Activated CD4-positive, alpha-beta T cell treated with anti-CD3 and anti-CD28 coated beads for 36 hours (primary cell): ENCODE measurements at regions of chr16 and their contacts with region 1.

Region 1: DNA sequence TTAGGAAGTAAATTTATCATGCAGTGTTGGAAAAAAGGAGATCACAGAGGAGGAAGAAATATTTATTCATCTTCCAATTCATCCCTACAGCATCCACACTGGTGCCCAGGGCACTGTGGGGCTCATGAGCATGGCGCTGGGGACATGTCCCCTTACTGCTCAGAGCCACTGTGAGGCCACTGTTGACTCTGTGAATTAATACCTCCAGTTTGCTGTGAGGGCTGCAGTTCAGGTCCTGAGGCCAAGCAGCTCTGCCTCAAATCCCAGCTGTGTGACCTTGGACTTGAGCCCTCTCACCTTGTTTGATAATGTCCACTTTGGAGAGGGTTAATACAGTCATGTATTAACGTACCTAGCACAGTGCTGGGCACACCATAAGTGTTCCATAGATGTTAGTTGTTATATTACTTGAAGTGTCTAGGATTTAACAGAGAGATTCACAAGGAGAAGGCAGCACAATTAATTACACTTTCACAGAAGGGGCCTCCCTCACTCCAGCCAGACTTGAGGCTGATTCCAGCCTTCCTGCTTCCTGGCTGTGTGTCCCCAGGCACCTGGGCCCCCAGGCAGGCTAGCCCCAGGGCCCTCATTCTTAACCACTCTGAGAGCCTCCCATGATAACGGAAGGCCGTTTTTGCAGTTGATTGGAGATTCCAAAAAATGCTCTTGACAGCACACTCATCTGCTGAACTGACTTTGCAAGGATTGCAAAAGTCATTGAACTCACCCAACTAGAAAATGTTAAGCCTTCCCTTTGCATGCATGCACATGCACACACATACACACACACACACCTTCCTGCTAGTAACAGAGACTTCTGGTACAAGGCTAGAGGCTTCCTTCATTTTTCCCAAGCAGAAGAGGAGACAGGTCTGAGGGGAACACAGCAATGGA is 29.4 kb downstream of the KATNIP start:
- DNase-seq: no peak
- ATAC-seq: peak; percentile 27
- H3K4me3 Mint-ChIP-seq: no peak overlapping the region
- H3K27ac Mint-ChIP-seq: no peak overlapping the region
- H3K4me1 Mint-ChIP-seq: peaks cover 11% of the 10 kb centered on the region
- H3K27me3 Mint-ChIP-seq: no peaks in the 10 kb centered on the region

Region 2: DNA sequence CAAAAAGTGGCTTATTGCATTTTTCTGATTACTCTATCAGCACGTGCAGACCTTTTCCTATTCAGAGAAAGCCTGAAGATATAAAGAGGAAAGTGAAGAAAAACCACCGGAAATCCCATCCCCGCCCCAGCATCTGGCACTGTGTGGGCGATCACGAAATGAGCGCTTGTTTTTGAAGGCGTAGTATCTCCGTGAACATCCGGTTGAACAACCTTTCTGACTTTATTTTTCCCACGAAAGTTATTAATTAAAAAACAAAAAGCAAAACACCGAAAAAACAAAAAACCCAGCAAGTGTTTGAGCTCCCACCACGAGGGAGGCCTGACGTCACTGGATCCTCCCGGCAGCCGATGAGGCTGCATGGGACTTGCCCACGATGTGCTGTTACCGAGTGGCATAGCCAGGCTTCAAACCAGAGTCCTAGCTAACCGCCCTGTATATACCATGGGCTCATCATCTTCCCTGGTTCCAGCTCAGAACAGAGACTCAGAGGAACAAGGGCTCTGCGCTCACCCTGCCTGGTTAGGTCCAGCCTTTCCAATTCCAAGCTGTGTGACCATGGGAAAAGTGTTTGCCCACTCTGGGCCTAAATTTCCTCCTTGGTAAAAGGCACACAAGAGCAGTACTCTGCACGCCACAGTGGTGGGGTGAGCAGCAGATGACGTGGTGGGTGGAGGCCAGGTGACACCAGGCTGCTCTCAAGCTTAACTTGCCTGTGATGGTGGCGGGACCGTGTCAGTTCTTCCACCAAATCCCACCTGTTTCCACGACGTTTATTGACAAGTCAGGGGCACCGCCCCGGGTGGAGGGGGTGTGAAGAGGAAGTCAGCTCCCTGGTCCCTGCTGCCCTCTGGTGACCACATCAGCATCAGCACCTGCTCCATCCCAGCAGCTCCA is 211.6 kb before region 1 on chr16:
- CTCF ChIA-PET with region 1: no interaction called
- POLR2A ChIA-PET with region 1: no interaction called
- intact Hi-C with region 1: no loop called
- DNase-seq: peak; percentile 95
- ATAC-seq: peak; percentile 74
- H3K4me3 Mint-ChIP-seq: peak overlapping the region; percentile 58
- H3K27ac Mint-ChIP-seq: peak overlapping the region; percentile 98
- H3K4me1 Mint-ChIP-seq: peaks cover 79% of the 10 kb centered on the region
- H3K27me3 Mint-ChIP-seq: no peaks in the 10 kb centered on the region

Region 3: DNA sequence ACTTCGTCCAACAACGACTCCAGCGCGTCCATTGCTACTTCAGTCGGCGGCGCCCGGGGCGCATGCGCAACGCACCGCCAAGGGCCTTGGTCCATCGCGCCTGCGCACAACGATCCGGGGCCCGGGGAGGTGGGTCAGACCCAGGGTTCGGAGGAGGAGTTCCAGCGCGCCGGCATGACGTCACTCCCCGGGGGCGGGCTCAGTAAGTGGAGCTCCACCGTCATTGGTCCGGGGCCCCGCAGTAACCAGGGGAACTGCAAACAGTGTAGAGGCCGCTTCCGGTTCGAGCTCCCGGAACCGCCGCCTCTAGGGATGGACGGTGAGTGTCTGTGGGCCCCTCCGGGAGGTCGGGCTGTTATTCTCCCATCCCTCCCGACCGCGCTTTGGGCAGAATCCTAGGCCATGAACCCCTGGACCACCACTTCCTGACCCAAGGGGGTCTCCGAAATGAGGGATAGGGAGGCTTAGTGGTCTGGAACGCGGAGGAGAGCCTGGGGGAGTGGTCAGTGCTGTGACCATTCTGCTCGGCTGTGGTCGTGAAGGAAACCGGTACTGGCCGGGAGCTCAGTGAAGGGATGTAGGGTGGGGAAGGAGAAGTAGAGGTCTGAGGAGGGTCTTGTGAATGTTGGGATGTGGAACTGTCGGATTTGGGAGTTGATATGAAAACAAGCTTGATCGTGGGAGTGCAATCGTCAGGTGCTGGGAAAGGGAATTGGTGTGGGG is 29.3 kb before region 1 on chr16 and contains the starts of genes GTF3C1 and KATNIP:
- CTCF ChIA-PET with region 1: no interaction called
- POLR2A ChIA-PET with region 1: no interaction called
- intact Hi-C with region 1: loop called in 1 of 2 experiments (anchors 1 kb)
- DNase-seq: peak; percentile 100
- ATAC-seq: peak; percentile 98
- H3K4me3 Mint-ChIP-seq: peak within 1 kb of the TSS; percentile 94
- H3K27ac Mint-ChIP-seq: peak within 1 kb of the TSS; percentile 81
- H3K4me1 Mint-ChIP-seq: peaks cover 35% of the 10 kb centered on the region
- H3K27me3 Mint-ChIP-seq: no peaks in the 10 kb centered on the region
- total RNA-seq, gene GTF3C1: 48.8 to 50.7 TPM
- total RNA-seq, gene KATNIP: 12.3 to 12.8 TPM